GM10248 (cell line): ENCODE measurements at regions of chr2 and their contacts with region 1.

Region 1: GRCh38 chr2:23824777-23825212 is 102.1 kb downstream of the ATAD2B start:
- DNase-seq: peak; percentile 55
- CTCF ChIP-seq: peak; percentile 70

Region 2: DNA sequence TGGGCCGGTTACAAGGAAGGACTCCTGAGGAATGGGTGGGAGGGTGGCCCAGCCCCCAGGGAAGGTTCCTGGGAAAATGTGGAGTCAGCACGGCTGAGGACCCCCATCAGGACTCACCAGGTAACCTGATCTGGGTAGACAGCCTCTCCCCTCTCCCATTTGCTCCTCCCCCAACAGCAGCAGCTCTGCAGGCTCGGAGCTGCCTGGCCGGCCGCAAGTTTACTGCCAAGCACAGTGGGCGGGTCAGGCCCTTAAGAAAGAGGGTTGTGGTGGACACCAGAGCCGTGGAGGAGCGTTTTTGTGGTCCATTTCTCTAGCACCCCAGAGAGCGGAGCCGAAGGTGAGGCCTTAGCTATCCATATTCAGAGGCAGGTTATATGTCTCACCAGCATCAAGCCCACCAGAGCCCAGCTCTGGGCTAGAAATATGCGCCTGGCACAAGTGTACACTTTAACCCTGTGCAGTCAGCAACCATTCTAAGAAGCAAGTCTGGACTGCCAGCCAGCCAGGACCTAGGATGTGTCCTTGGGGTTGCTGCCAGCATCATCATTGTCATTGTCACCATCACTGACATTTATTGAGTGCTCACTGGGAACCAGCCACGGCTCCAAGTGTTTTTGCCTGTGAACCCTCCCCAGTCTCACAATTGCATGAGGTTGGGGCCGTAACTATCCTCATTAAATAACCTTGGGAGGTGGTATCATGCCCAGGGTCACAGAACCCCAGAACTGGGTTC is 249.7 kb before region 1 on chr2:
- CTCF ChIA-PET with region 1: no interaction called
- POLR2A ChIA-PET with region 1: no interaction called
- DNase-seq: no peak
- CTCF ChIP-seq: no peak

Region 3: DNA sequence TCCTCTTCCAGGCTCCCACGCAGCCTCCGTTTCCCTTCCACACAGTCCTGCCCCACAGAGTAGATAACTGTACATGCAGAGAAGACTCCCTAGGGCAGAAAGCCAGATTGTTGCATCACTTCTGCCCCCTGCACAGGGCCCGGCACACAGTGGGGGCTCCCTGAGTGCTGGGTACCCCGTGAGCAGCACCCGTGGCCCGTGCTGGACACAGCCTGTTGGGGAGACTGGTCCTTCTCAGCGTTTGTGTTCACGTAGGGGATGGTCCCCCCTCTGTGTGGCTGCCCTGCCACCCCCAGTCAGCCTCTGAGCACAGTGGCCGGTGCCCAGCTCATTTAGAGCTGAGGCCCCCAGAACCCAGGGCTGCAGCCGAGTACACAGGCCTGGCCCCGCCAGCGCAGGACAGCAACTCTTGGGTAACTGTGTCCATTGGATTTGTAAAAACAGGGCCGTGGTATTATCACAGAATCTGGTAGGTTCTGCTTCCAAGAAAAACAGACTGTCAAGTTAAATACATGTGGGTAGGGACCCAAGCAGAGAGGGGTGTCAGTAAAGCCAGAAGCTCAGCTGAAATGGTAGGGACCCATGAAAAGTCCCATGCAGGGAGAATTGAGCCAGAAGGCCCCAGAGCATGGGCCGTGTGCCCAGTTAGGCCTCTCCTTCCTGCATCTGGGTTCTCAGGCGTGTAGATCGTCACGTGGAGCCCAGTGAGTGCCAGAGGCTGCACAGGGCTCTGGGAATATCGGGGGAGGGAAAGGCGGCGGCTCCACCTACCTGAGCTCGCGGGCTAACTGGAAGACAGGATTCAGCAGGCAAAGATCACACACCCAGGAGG is 155.2 kb before region 1 on chr2:
- CTCF ChIA-PET with region 1: no interaction called
- POLR2A ChIA-PET with region 1: no interaction called
- DNase-seq: no peak
- CTCF ChIP-seq: no peak

Region 4: GRCh38 chr2:23813438-23813837 is 11.4 kb before region 1 on chr2:
- CTCF ChIA-PET with region 1: interaction called, 37 read pairs
- POLR2A ChIA-PET with region 1: no interaction called
- DNase-seq: no peak
- CTCF ChIP-seq: no peak

Region 5: DNA sequence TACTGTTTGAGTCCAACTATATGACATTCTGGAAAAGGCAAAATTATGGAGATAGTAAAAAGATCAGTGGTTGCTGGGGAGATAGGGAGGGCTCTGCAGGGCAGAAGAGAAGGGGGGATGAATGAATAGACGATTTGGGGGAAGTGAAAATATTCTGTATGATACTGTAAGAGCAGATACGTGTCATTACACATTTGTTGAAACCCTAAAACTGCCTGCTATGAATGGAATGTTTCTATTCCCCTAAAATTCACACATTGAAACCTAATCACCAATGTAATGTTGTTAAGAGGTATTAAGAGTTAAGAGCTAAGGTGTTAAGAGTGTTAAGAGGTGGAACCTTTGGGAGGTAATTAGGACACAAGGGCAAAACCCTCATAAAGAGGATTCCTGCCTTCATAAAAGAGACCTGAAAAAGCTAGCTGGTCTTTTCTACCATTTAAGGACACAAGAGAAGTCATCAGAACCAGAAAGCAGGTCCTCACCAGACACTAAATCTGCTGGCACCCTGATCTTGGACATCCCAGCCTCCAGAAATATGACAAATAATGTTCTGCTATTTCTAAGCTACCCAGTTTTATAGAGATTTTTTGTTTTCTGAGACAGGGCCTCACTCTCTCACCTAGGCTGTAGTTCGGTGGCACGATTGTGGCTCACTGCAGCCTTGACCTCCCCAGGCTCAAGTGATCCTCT is 25.9 kb after region 1 on chr2:
- CTCF ChIA-PET with region 1: interaction called, 10 read pairs
- POLR2A ChIA-PET with region 1: no interaction called
- DNase-seq: peak; percentile 49
- CTCF ChIP-seq: no peak

Region 6: GRCh38 chr2:24058564-24059271 is 233.9 kb after region 1 on chr2:
- CTCF ChIA-PET with region 1: interaction called, 18 read pairs
- POLR2A ChIA-PET with region 1: interaction called, 3 read pairs
- DNase-seq: no peak
- CTCF ChIP-seq: no peak

Region 7: GRCh38 chr2:24164125-24164973 is 339.6 kb after region 1 on chr2:
- CTCF ChIA-PET with region 1: interaction called, 27 read pairs
- POLR2A ChIA-PET with region 1: no interaction called
- DNase-seq: peak; percentile 79
- CTCF ChIP-seq: peak; percentile 81